PC-9 (cell line): ENCODE measurements at regions of chr12 and their contacts with region 1.

Region 1: GRCh38 chr12:13211859-13212664 is 15.5 kb downstream of the EMP1 start:
- DNase-seq: peak in 1 of 2 experiments; percentile 64
- H3K4me3 ChIP-seq: no peak overlapping the region
- H3K27ac ChIP-seq: peak overlapping the region; percentile 99
- H3K4me1 ChIP-seq: peaks cover 48% of the 10 kb centered on the region
- H3K27me3 ChIP-seq: no peaks in the 10 kb centered on the region
- CTCF ChIP-seq: peak; percentile 71

Region 2: GRCh38 chr12:12724661-12725545 is 487.2 kb before region 1 on chr12:
- CTCF ChIA-PET with region 1: no interaction called
- POLR2A ChIA-PET with region 1: no interaction called
- intact Hi-C with region 1: loop called (anchors 10 kb)
- DNase-seq: peak in 1 of 2 experiments; percentile 96
- H3K4me3 ChIP-seq: peak overlapping the region; percentile 96
- H3K27ac ChIP-seq: peak overlapping the region; percentile 98
- H3K4me1 ChIP-seq: peaks cover 31% of the 10 kb centered on the region
- H3K27me3 ChIP-seq: no peaks in the 10 kb centered on the region
- CTCF ChIP-seq: no peak

Region 3: GRCh38 chr12:12999959-13000615 is 212.0 kb before region 1 on chr12 and contains the start of gene HEBP1:
- CTCF ChIA-PET with region 1: interaction called, 3 read pairs
- POLR2A ChIA-PET with region 1: no interaction called
- intact Hi-C with region 1: loop called (anchors 2 kb)
- DNase-seq: peak; percentile 64 to 98
- H3K4me3 ChIP-seq: peak within 1 kb of the TSS; percentile 99
- H3K27ac ChIP-seq: peak within 1 kb of the TSS; percentile 85
- H3K4me1 ChIP-seq: peaks cover 18% of the 10 kb centered on the region
- H3K27me3 ChIP-seq: no peaks in the 10 kb centered on the region
- CTCF ChIP-seq: no peak; the same call in 1 of the 2 replicates
- total RNA-seq, gene HEBP1: 148 and 195 TPM in 2 replicates

Region 4: DNA sequence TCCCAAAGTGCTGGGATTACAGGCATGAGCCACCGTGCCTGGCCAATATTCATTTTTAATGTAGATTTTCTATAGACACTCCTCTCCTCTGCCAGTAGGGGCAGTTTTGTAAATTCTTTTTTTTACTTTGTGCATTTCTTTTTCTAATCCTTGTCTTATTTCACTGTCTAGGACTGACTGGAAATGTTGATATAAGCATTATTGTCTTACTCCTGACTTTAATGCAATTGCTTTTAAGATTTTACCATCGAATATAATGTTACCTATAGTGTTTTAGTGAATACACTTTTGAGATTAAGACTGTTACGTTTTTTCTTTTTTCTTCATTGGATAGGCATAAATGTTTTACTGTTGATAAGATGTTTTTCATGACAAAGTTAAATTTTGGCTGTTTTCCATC is 50.9 kb before region 1 on chr12:
- CTCF ChIA-PET with region 1: no interaction called
- POLR2A ChIA-PET with region 1: no interaction called
- intact Hi-C with region 1: no loop called
- DNase-seq: no peak
- H3K4me3 ChIP-seq: no peak overlapping the region
- H3K27ac ChIP-seq: no peak overlapping the region
- H3K4me1 ChIP-seq: peaks cover 29% of the 10 kb centered on the region
- H3K27me3 ChIP-seq: no peaks in the 10 kb centered on the region
- CTCF ChIP-seq: peak; percentile 67

Region 5: GRCh38 chr12:13173012-13173932 is 38.8 kb before region 1 on chr12:
- CTCF ChIA-PET with region 1: interaction called, 3 read pairs
- POLR2A ChIA-PET with region 1: interaction called, 3 read pairs
- intact Hi-C with region 1: loop called (anchors 1 kb)
- DNase-seq: peak; percentile 93 to 97
- H3K4me3 ChIP-seq: peak overlapping the region; percentile 37; the same call in 1 of the 2 replicates
- H3K27ac ChIP-seq: peak overlapping the region; percentile 99
- H3K4me1 ChIP-seq: peaks cover 100% of the 10 kb centered on the region
- H3K27me3 ChIP-seq: no peaks in the 10 kb centered on the region
- CTCF ChIP-seq: no peak

Region 6: GRCh38 chr12:13223179-13223859 is 11.3 kb after region 1 on chr12:
- CTCF ChIA-PET with region 1: interaction called, 8 read pairs
- POLR2A ChIA-PET with region 1: no interaction called
- intact Hi-C with region 1: loop called (anchors 1 kb)
- DNase-seq: peak; percentile 71 to 95
- H3K4me3 ChIP-seq: no peak overlapping the region
- H3K27ac ChIP-seq: peak overlapping the region; percentile 96
- H3K4me1 ChIP-seq: peaks cover 46% of the 10 kb centered on the region
- H3K27me3 ChIP-seq: no peaks in the 10 kb centered on the region
- CTCF ChIP-seq: no peak

Region 7: DNA sequence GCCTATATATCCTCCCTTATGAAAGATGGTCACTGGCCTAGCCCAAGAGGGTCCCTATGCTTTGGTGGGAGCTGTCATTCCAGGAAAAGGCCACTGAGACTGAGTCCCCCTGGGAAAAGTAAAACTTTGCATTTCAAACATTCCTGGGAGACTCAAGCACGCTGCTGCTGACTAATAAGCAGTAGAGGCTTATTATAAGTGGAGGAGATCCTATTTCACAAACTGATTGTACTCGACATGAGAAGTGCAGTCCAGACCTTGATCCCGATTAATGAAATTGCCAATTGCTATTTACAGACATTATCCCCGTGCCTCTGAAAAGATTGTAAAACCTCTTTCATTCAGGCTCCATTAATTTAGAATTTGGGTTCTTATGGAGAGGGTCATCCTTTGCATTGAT is 81.0 kb after region 1 on chr12:
- CTCF ChIA-PET with region 1: no interaction called
- POLR2A ChIA-PET with region 1: no interaction called
- intact Hi-C with region 1: no loop called
- DNase-seq: no peak
- H3K4me3 ChIP-seq: no peak overlapping the region
- H3K27ac ChIP-seq: no peak overlapping the region
- H3K4me1 ChIP-seq: no peaks in the 10 kb centered on the region
- H3K27me3 ChIP-seq: no peaks in the 10 kb centered on the region
- CTCF ChIP-seq: no peak

Region 8: GRCh38 chr12:13727707-13728195 is 515.7 kb after region 1 on chr12:
- CTCF ChIA-PET with region 1: no interaction called
- POLR2A ChIA-PET with region 1: no interaction called
- intact Hi-C with region 1: no loop called
- DNase-seq: no peak
- H3K4me3 ChIP-seq: no peak overlapping the region
- H3K27ac ChIP-seq: no peak overlapping the region
- H3K4me1 ChIP-seq: 0 out of 2 replicates have a peak, but pooled peaks cover 6% of the 10 kb centered on the region
- H3K27me3 ChIP-seq: 0 out of 2 replicates have a peak, but pooled peaks cover 9% of the 10 kb centered on the region
- CTCF ChIP-seq: no peak